AG04449 (cell line): ENCODE measurements at regions of chr12 and their contacts with region 1.

Region 1: GRCh38 chr12:98516184-98516873 is 939 bp downstream of the TMPO start:
- DNase-seq: peak; percentile 16
- H3K4me3 ChIP-seq: peak overlapping the region; percentile 95
- CTCF ChIP-seq: peak; percentile 51

Region 2: GRCh38 chr12:98418357-98419075 is 97.8 kb before region 1 on chr12:
- CTCF ChIA-PET with region 1: interaction called, 105 read pairs
- POLR2A ChIA-PET with region 1: interaction called, 7 read pairs
- DNase-seq: peak; percentile 99
- H3K4me3 ChIP-seq: peak overlapping the region; percentile 45
- CTCF ChIP-seq: no peak

Region 3: GRCh38 chr12:98439981-98440581 is 76.2 kb before region 1 on chr12:
- CTCF ChIA-PET with region 1: interaction called, 10 read pairs
- POLR2A ChIA-PET with region 1: no interaction called
- DNase-seq: peak; percentile 91
- H3K4me3 ChIP-seq: no peak overlapping the region
- CTCF ChIP-seq: no peak

Region 4: DNA sequence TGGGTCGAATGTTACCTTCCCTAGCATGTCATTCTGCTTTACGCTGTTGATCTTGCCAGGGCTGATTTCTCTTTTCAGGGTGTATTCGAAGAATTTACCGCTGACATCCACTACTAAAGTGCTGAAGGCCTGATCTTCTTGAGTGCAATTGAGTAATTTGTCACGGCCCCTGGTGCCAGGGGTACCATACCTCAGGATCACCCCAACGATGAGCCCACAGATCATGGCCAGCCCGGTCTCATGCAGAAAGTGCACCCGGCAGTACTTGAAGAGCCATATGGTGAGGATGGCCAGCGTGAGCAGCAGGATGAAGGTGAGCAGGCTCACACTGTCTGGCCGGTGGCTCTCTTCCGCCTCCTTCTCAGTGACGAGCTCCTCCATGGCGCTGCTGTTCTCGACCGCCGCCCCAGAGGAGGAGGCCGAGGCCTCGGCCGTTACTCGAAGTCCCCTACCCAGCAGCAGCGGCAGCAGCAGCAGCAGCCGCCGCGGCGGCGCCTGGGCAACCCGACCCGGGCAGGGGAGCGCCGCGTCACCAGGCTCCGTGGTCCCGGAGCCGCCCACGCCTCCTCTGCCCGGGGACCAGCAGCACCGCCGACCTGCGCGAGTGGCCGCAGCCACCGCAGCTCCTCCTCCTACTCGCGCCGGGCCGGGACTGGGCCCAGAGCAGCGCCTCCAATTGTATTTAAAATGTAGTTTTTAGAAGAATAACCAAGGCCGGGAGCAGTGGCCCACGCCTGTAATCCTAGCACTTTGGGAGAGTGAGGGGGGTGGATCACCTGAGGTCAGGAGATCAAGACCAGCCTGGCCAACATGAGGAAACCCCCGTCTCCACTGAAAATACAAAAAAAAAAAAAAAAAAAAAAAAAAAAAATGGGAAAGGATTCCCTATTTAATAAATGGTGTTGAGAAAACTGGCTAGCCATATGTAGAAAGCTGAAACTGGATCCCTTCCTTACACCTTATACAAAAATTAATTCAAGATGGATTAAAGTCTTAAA is 59.5 kb before region 1 on chr12:
- CTCF ChIA-PET with region 1: no interaction called
- POLR2A ChIA-PET with region 1: no interaction called
- DNase-seq: no peak
- H3K4me3 ChIP-seq: peak overlapping the region; percentile 50
- CTCF ChIP-seq: no peak

Region 5: GRCh38 chr12:98503592-98504367 is 12.5 kb before region 1 on chr12:
- CTCF ChIA-PET with region 1: interaction called, 24 read pairs
- POLR2A ChIA-PET with region 1: interaction called, 4 read pairs
- DNase-seq: peak; percentile 52
- H3K4me3 ChIP-seq: peak overlapping the region; percentile 80
- CTCF ChIP-seq: no peak

Region 6: GRCh38 chr12:98532681-98533304 is 16.5 kb after region 1 on chr12:
- CTCF ChIA-PET with region 1: interaction called, 45 read pairs
- POLR2A ChIA-PET with region 1: no interaction called
- DNase-seq: no peak
- H3K4me3 ChIP-seq: no peak overlapping the region
- CTCF ChIP-seq: peak; percentile 29